Activated naive CD4-positive, alpha-beta T cell treated with anti-CD3 and anti-CD28 coated beads for 36 hours (primary cell): ENCODE measurements at regions of chr20 and their contacts with region 1.

Region 1: GRCh38 chr20:1225783-1226654 is at the start of gene RAD21L1:
- DNase-seq: peak; percentile 88
- H3K4me3 Mint-ChIP-seq: peak within 1 kb of the TSS; percentile 83
- H3K27ac Mint-ChIP-seq: no peak within 1 kb of the TSS
- H3K4me1 Mint-ChIP-seq: peaks cover 10% of the 10 kb centered on the region
- H3K27me3 Mint-ChIP-seq: peaks cover 6% of the 10 kb centered on the region
- total RNA-seq, gene RAD21L1: not detected

Region 2: DNA sequence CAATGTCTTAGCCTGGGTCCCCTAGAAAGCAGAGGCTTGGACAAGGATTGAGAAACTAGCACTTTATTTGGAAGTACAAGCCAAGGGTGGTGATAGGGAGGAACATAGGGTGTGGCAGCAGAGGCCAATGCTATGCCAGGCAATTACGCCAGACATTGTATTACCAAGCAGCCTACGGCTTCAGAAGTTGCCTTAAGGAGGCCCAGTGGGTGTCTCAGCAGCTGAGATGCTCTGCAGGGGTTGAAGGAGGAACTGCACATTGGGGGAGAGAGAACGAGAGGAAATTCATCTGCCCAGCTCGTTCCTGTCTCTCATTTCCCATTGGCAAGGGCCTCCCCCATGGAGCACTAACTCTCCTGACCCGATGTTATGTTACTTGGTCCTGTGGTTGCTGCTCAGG is 21.9 kb before region 1 on chr20:
- CTCF ChIA-PET with region 1: no interaction called
- intact Hi-C with region 1: no loop called
- DNase-seq: no peak
- H3K4me3 Mint-ChIP-seq: no peak overlapping the region
- H3K27ac Mint-ChIP-seq: no peak overlapping the region
- H3K4me1 Mint-ChIP-seq: peaks cover 5% of the 10 kb centered on the region
- H3K27me3 Mint-ChIP-seq: no peaks in the 10 kb centered on the region

Region 3: GRCh38 chr20:1299522-1299921 is 73.5 kb after region 1 on chr20:
- CTCF ChIA-PET with region 1: no interaction called
- intact Hi-C with region 1: loop called (anchors 5 kb)
- DNase-seq: peak; percentile 52
- H3K4me3 Mint-ChIP-seq: no peak overlapping the region
- H3K27ac Mint-ChIP-seq: no peak overlapping the region
- H3K4me1 Mint-ChIP-seq: peaks cover 21% of the 10 kb centered on the region
- H3K27me3 Mint-ChIP-seq: no peaks in the 10 kb centered on the region